ENCODE measurements at regions of chr2 and their contacts with region 1.

Region 1: GRCh38 chr2:8671802-8672201 is 10.1 kb upstream of the ID2 start:
- DNase-seq: no peak
- H3K4me3 ChIP-seq: no peak overlapping the region
- H3K27ac ChIP-seq: no peak overlapping the region
- H3K4me1 ChIP-seq: peaks cover 12 to 32% (median 23%) of the 10 kb centered on the region in 4 donors
- H3K27me3 ChIP-seq: no peaks in the 10 kb centered on the region
- CTCF ChIP-seq: no peak
- EP300 ChIP-seq: no peak
- POLR2A ChIP-seq: no peak

Region 2: GRCh38 chr2:8583400-8584173 is 88.2 kb before region 1 on chr2:
- intact Hi-C with region 1: loop called (anchors 5 kb)
- DNase-seq: peak; percentile 98
- H3K4me3 ChIP-seq: peak overlapping the region; percentile 26 to 48 (median 37)
- H3K27ac ChIP-seq: peak overlapping the region; percentile 75 to 83 (median 80)
- H3K4me1 ChIP-seq: peaks cover 19 to 41% (median 39%) of the 10 kb centered on the region in 4 donors
- H3K27me3 ChIP-seq: no peaks in the 10 kb centered on the region
- CTCF ChIP-seq: no peak
- EP300 ChIP-seq: no peak
- POLR2A ChIP-seq: no peak

Measured in esophagus muscularis mucosa (tissue), 4 donors.